H1 (cell line): ENCODE measurements at regions of chr4 and their contacts with region 1.

Region 1: GRCh38 chr4:184590196-184590595 is 59.1 kb downstream of the CASP3 start:
- DNase-seq: no peak
- H3K4me3 ChIP-seq: no peak overlapping the region
- H3K27ac ChIP-seq: no peak overlapping the region
- H3K4me1 ChIP-seq: no peaks in the 10 kb centered on the region
- H3K27me3 ChIP-seq: no peaks in the 10 kb centered on the region
- CTCF ChIP-seq: no peak
- EP300 ChIP-seq: no peak
- POLR2A ChIP-seq: no peak
- RAD21 ChIP-seq: no peak

Region 2: GRCh38 chr4:184538023-184538599 is 52.1 kb before region 1 on chr4:
- CTCF ChIA-PET with region 1: no interaction called
- POLR2A ChIA-PET with region 1: no interaction called
- DNase-seq: no peak
- H3K4me3 ChIP-seq: peak overlapping the region in 3 of 4 experiments; percentile 79 to 85 (median 81); a peak in 6 of 8 replicates
- H3K27ac ChIP-seq: no peak overlapping the region
- H3K4me1 ChIP-seq: peaks cover 0 to 6% (median 3%) of the 10 kb centered on the region in 4 experiments; a peak in 5 of 7 replicates
- H3K27me3 ChIP-seq: no peaks in the 10 kb centered on the region
- CTCF ChIP-seq: peak in 2 of 3 experiments; percentile 21 to 25; a peak in 2 of 4 replicates
- EP300 ChIP-seq: no peak
- POLR2A ChIP-seq: no peak
- RAD21 ChIP-seq: peak; percentile 54 to 71

Region 3: GRCh38 chr4:184616633-184617551 is 26.7 kb after region 1 on chr4:
- CTCF ChIA-PET with region 1: interaction called, 3 read pairs
- POLR2A ChIA-PET with region 1: interaction called, 11 read pairs
- DNase-seq: peak in 1 of 2 experiments; percentile 50
- H3K4me3 ChIP-seq: peak overlapping the region in 1 of 4 experiments; percentile 40; a peak in 2 of 8 replicates
- H3K27ac ChIP-seq: peak overlapping the region; percentile 78; the same call in 1 of the 2 replicates
- H3K4me1 ChIP-seq: peaks cover 1 to 8% (median 4%) of the 10 kb centered on the region in 4 experiments; a peak in 6 of 7 replicates
- H3K27me3 ChIP-seq: no peaks in the 10 kb centered on the region
- CTCF ChIP-seq: no peak
- EP300 ChIP-seq: peak in 1 of 2 experiments; percentile 52; a peak in 1 of 3 replicates
- POLR2A ChIP-seq: 0 out of 3 replicates have a peak, but pooled peaks of 1 of the 2 experiments have one; percentile 15
- RAD21 ChIP-seq: no peak

Region 4: DNA sequence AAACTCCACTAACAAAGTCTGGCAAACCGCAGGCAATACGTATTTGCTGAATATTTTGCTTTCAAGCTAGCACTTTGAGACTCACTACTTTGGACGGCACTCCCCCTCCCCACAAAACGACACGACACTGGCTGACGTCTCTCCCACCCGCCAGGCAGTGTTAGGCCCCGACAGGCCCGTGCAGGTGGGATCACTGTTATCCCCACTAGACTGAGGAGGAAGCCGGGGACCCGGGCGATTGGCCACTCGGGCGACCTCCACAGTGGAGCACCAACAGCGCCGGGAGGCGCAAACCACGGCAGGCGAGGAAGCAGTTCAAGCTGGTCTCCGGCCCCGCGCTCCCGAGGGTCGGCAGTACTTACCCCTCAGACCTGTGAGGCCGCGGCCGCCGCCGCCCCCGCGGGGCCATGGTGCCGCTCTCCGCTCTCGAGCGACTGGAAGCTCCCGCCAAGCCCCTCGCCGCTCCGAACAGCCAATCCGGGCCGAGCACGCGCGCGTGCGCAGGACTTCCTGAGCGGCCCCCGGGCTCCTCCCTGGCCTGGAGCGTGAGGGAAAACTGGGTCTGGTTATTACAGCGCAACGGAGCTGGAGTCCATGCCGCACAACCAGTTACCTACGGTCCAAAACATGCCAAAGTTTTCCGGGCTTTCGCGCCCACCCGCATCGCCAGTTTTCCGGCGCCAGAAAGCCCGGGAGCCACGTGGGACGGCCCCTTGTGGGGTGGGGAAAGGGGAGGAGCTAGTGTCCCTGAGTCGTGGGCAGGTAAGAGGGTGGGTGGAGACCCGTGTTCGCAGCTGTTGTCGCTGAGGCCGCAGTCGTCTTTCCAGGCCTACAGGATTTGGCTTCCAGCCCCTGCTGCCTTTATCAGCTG is 143.7 kb after region 1 on chr4 and contains the start of gene CENPU:
- CTCF ChIA-PET with region 1: no interaction called
- POLR2A ChIA-PET with region 1: no interaction called
- DNase-seq: peak; percentile 97 to 99
- H3K4me3 ChIP-seq: peak within 1 kb of the TSS; percentile 92 to 99 (median 98)
- H3K27ac ChIP-seq: peak within 1 kb of the TSS; percentile 93
- H3K4me1 ChIP-seq: peaks cover 0 to 8% (median 3%) of the 10 kb centered on the region in 4 experiments; a peak in 4 of 7 replicates
- H3K27me3 ChIP-seq: no peaks in the 10 kb centered on the region
- CTCF ChIP-seq: no peak
- EP300 ChIP-seq: peak in 1 of 2 experiments; percentile 88; a peak in 1 of 3 replicates
- POLR2A ChIP-seq: peak; percentile 80 to 82
- RAD21 ChIP-seq: peak in 1 of 2 experiments; percentile 7; a peak in 1 of 4 replicates
- total RNA-seq, gene CENPU: 122 and 124 TPM in 2 replicates